GM18951 (cell line): ENCODE measurements at regions of chr13 and their contacts with region 1.

Region 1: GRCh38 chr13:52809310-52809769 is 39.1 kb downstream of the PCDH8 start:
- POLR2A ChIP-seq: no peak

Region 2: GRCh38 chr13:52345048-52345447 is 464.3 kb before region 1 on chr13:
- in situ Hi-C with region 1: no loop called
- POLR2A ChIP-seq: no peak

Region 3: GRCh38 chr13:52665325-52665724 is 144.0 kb before region 1 on chr13:
- in situ Hi-C with region 1: loop called (anchors 10 kb)
- POLR2A ChIP-seq: no peak